ENCODE measurements at regions of chr18 and their contacts with region 1.

Region 1: DNA sequence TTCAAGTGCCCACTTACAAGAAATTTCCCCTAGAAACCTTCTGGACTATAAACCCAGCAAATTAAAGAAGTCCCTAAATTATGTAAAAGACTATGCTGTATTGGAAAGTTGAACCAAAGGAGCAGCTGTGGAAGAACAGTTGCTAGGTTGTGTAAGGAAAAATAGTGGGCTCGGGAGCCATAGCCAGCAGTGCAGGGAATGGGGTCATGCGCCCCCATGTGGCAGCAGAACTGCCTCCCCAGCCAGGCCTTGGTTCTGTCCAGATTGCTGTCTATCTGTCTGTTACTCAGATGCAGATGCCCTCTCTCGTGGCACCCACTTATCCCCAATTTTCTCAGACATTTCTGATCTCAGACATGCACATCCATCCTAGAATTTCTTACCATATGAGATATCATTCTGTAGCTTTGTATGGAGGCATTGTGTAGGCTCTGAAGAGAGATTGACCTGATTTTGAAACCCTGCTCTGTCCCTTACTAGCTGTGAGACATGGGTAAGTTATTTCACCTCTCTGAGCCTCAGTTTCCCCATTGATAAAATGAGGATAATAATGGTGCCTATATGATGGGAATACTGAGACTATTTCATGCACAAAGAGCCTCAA is 258.3 kb downstream of the SS18 start:
- DNase-seq: peak; percentile 83

Region 2: DNA sequence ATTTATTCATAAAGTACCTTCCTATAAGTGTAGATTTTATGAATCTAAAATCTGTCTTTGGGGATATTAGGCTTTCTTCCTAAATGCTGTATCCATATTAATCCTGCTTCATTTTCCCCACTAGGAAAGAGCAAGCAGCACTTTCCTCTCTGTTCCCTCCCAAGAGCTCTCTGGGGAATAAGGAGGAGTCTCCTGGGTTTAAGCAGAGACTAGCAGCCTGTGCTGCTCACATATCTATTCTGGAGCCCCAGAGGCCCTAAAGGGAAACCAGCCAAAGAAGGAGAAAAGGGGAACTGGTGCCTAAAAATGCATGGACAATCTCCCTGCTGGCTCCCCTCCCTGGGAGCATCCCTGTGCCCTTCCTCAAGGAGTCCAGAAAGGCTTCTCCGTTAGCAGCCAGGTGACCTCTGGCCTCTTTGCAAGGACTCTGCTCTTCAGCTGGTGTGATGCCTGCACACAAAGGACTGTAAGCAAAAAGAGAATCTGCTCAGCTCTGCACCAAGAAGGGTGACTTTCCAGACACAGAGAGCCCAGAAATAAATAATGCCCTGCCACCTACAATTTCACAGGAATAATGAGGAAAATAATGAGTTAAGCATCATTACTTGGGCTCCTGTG is 12.2 kb before region 1 on chr18:
- intact Hi-C with region 1: no loop called
- DNase-seq: no peak

Region 3: DNA sequence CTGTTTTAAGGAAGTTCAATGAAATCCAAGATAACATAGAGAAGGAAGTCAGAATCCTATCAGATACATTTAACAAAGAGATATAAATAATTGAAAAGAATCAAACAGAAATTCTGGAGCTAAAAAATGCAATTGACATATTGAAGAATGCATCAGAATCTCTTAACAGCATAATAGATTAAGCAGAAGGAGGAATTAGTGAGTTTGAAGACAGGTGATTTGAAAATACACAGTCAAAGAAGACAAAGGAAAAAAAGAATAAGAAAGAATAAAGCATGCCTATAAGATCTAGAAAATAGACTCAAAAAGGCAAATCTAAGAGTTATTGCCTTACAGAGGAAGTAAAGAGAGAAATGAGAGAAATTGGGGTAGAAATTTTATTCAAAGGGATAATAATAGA is 54.2 kb after region 1 on chr18:
- intact Hi-C with region 1: loop called in 1 of 2 experiments (anchors 5 kb)
- DNase-seq: no peak